Activated CD4-positive, alpha-beta T cell treated with anti-CD3 and anti-CD28 coated beads, Interleukin-2, amount 10 ng/mL, durations not matched to agents 24 days and 14 days (primary cell): ENCODE measurements at regions of chr6 and their contacts with region 1.

Region 1: DNA sequence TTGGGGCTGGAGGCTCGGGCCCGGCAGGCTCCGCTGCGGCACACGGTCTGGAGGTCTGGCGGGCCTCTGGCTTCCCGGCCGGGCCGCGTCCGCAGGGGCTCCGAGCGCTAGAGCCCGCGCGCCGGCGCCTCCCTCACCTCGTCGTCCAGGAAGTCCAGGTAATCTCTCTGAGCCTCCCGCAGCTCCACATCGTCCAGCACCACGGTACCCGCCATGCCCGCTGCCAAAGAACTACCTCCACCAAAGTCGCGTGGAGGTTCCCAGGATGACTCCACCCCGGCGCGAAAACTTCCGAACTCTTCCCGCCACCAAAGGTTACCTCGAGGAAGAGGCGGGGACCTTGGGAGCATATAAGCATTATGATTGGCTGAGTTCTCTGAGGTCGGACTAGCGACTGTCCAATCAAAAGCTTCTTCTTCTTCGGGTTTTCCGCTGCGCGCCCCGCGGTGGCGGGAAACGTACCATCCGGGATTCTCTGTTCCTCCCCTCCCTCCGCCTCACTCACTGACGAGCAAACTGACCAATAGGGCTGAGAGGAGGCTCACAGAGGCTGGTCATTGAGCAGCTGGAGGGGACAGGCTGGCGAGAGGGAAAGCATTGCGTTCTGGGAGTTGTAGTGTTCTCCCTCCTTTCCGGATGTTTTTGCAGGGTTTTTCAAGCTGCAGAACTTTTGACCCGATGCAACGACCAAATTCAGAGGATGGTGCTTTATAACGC is at the start of gene MCM3:
- DNase-seq: peak; percentile 99
- H3K4me3 Mint-ChIP-seq: peak within 1 kb of the TSS; percentile 85
- H3K27ac Mint-ChIP-seq: peak within 1 kb of the TSS; percentile 38
- H3K4me1 Mint-ChIP-seq: peaks cover 37% of the 10 kb centered on the region
- H3K27me3 Mint-ChIP-seq: no peaks in the 10 kb centered on the region
- total RNA-seq, gene MCM3: 239 and 240 TPM in 2 replicates

Region 2: DNA sequence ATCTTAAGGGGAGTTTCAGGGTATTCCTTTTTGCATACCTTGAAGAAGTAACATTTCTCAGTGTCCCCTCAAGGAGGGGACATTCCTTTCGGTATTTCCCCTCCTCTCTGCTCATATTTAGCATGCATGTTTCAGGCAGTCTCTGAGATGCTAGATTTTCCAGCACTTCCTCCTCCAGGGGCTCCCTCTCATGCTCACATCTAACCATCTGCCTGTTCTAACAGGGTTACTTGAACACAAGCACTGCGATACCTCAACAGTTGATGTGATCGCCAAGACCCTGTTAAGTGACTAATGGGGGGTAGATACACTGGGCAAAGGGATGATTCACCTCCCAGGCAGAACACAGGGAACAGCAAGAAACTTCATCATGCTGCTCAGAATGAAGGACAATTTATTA is 12.8 kb after region 1 on chr6:
- intact Hi-C with region 1: loop called (anchors 1 kb)
- DNase-seq: no peak
- H3K4me3 Mint-ChIP-seq: no peak overlapping the region
- H3K27ac Mint-ChIP-seq: peak overlapping the region; percentile 70
- H3K4me1 Mint-ChIP-seq: peaks cover 30% of the 10 kb centered on the region
- H3K27me3 Mint-ChIP-seq: no peaks in the 10 kb centered on the region

Region 3: DNA sequence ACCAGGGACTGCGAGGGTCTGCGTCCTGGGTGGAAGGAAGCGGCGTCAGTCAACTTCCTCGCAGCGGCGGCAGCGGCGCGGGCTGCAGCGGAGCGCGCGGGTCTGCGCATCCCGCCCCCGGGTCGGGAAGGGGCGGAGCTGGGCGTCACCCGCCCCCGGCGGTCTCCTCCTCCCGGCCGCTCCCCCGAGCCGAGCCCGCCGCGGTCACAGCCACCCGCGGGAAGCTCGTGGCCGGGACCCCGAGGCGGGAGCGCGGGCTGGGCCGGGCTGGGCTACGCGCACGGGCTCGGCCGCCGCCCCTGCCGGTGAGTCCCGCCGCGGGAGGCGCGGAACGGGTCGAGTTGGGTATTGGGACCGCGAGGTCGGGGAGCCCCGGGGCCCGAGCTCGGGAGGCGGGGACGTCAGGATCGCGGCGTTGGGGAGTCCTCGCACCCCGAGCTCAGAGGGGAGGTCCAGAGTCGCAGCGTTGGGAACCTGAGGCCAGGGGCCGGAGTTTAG is 77.4 kb after region 1 on chr6 and contains the start of gene PAQR8:
- intact Hi-C with region 1: loop called (anchors 1 kb)
- DNase-seq: peak; percentile 96
- H3K4me3 Mint-ChIP-seq: peak within 1 kb of the TSS; percentile 99
- H3K27ac Mint-ChIP-seq: peak within 1 kb of the TSS; percentile 92
- H3K4me1 Mint-ChIP-seq: peaks cover 25% of the 10 kb centered on the region
- H3K27me3 Mint-ChIP-seq: no peaks in the 10 kb centered on the region
- total RNA-seq, gene PAQR8: 4.5 and 4.8 TPM in 2 replicates

Region 4: DNA sequence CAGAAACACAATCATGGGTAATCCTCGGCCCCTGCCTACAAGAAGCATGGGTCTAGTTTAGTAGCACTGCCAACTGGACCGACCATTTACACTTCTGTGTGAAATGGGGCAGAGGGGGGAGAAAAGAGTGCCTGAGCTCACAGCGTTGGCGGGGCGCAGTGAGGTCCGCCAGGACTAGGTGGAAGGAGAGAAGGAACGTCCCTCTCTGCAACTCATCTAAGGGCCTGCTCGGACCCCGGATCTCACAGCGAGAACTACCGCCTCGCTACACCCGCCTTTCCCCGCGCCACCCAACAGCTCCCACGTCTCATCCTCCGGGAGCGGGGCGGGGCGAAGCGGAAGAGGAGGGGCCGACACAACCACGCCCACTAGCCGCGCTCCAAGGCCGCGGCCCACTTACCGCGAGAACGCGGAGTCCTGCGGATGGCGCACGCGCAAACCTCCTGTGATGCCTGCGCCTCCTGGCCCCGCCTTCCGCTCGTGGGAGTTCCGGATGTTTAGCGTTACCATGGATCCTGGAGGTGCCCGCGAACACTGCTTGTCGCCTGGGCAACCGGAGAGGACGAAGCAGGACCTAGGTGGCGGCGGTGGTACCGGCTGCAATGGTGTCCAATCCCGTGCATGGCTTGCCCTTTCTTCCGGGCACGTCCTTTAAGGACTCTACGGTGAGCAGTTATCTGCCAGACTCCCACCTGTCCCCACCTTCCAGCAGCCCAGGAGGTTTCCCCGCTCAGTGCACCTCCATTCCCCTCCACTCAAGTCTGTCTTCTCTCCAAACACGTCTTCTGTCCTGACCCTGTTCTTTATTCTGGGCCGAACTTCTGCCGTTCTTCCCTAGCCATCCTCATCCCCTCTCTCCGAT is 135.4 kb after region 1 on chr6 and contains the start of gene EFHC1:
- intact Hi-C with region 1: loop called (anchors 1 kb)
- DNase-seq: peak; percentile 100
- H3K4me3 Mint-ChIP-seq: no peak within 1 kb of the TSS
- H3K27ac Mint-ChIP-seq: no peak within 1 kb of the TSS
- H3K4me1 Mint-ChIP-seq: peaks cover 23% of the 10 kb centered on the region
- H3K27me3 Mint-ChIP-seq: peaks cover 11% of the 10 kb centered on the region
- total RNA-seq, gene EFHC1: 1.5 and 1.7 TPM in 2 replicates

Region 5: GRCh38 chr6:52577022-52577777 is 292.6 kb after region 1 on chr6 and contains the start of gene TRAM2:
- intact Hi-C with region 1: loop called (anchors 2 kb)
- DNase-seq: peak; percentile 94
- H3K4me3 Mint-ChIP-seq: peak within 1 kb of the TSS; percentile 81
- H3K27ac Mint-ChIP-seq: peak within 1 kb of the TSS; percentile 71
- H3K4me1 Mint-ChIP-seq: peaks cover 30% of the 10 kb centered on the region
- H3K27me3 Mint-ChIP-seq: peaks cover 13% of the 10 kb centered on the region
- total RNA-seq, gene TRAM2: 2.6 TPM in 2 replicates

Region 6: DNA sequence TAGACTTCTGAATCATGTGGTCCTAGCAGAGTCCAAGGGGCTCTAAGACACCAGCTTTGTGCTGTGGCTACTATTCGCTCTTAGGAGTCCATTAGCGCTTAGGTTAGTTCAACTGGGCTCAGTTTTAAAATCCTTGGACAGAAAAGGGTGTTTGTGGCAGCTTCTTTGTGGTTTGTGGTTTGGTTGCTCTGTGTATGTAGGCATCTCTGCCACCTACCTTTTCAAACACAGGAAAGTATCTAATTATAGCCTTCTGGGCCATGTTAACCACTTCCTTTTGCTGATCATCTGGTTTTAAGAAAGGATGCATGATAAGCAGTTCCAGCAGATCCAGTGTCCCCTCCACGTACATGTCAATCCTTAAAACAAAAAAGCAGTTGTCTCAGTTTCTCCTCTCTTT is 699.6 kb after region 1 on chr6:
- intact Hi-C with region 1: loop called (anchors 10 kb)
- DNase-seq: peak; percentile 84
- H3K4me3 Mint-ChIP-seq: peak overlapping the region; percentile 25
- H3K27ac Mint-ChIP-seq: peak overlapping the region; percentile 92
- H3K4me1 Mint-ChIP-seq: peaks cover 59% of the 10 kb centered on the region
- H3K27me3 Mint-ChIP-seq: peaks cover 2% of the 10 kb centered on the region

Region 7: DNA sequence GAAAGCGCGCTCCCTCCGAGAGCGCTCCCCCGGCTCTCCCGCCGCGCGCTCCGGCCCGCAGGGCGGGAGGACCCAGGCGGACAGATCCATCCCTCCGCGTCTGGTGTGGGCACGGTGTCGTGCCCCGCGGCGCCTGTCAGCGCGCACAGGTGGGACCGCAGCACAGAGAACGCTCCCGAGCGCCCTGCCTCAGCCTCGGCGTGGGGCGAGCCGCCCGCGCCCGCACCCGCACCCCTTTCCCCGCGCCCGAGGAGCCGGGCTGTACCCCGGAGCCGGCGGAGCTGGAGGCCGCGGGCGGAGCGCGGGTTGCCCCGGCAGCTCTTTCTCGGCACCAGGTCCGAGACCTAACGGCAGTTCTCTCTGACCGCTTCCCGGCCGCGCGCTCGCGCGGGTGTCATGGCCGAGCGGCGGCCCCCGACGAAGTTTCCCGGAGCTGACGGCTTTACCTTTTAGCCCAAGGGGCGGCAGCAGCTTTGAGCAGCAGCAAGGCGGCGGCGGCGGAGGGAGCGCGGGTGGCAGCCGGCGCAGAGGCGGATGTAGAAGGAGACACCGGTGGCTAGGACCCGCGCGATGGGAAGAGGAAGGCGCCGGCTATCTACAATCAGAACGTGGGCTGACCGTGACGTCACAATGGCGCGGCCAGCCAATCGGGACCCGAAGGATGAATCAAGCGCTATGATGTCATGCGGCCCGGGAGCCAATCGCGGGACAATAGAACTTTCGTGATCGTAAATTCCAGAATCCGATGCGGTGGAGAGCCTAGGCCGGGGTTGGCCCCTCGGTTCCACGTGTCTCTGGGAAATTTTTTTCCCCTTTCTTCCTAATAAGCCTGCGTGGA is 1064.0 kb after region 1 on chr6 and contains the start of gene ELOVL5:
- intact Hi-C with region 1: loop called (anchors 2 kb)
- DNase-seq: peak; percentile 99
- H3K4me3 Mint-ChIP-seq: peak within 1 kb of the TSS; percentile 93
- H3K27ac Mint-ChIP-seq: peak within 1 kb of the TSS; percentile 92
- H3K4me1 Mint-ChIP-seq: peaks cover 40% of the 10 kb centered on the region
- H3K27me3 Mint-ChIP-seq: peaks cover 19% of the 10 kb centered on the region
- total RNA-seq, gene ELOVL5: 122 and 126 TPM in 2 replicates